Head of caudate nucleus (tissue), 42 donors: ENCODE measurements at regions of chr18 and their contacts with region 1.

Region 1: DNA sequence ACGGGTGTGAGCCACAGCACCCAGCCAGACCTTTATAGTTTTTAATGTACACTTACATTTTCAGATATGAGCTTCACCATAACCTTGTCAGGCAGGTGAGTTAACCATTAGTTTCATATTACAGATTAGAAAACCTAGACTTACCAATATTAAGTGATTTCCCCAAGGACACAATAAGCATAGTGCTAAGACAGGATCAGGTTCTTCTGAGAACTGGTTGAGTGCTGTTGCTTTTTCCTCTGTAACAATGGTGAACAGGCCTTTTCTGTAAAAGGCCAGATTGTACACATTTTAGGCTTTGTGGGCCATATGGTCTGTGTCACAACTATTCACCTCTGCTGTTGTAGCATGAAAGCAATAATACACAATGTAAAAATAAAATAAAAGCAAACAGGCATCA is 332.0 kb downstream of the PIK3C3 start:
- DNase-seq: no peak

Region 2: DNA sequence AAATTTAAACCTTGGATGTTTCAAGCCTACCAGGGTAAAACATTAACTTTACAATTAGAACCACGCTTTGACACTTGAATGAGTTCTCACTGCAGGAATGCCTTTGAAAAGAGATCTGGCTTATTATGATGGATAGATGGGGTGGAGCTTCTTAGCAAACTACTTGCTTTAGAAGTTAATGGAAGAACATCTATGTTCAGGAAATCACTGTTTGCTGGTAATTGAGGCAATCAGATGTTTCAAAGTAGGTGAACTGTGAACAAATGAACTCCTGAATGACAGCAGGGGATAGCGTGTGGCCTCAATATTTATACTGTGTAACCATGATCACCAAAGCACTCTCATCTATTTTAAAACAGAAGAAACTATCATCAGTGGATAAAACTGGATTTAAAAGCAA is 51.6 kb after region 1 on chr18:
- intact Hi-C with region 1: loop called (anchors 10 kb)
- DNase-seq: no peak